ENCODE measurements at regions of chr12 and their contacts with region 1.

Region 1: GRCh38 chr12:121626087-121626852 is at the start of gene ORAI1:
- DNase-seq: peak; percentile 91 to 98 (median 95)
- ATAC-seq: peak; percentile 70
- H3K4me3 ChIP-seq: peak within 1 kb of the TSS; percentile 89
- H3K4me3 Mint-ChIP-seq: peak within 1 kb of the TSS; percentile 99
- H3K27ac ChIP-seq: peak within 1 kb of the TSS; percentile 90 to 96
- H3K27ac Mint-ChIP-seq: peak within 1 kb of the TSS; percentile 99
- H3K4me1 ChIP-seq: peaks cover 52% of the 10 kb centered on the region
- H3K4me1 Mint-ChIP-seq: peaks cover 53% of the 10 kb centered on the region
- H3K27me3 ChIP-seq: no peaks in the 10 kb centered on the region
- H3K27me3 Mint-ChIP-seq: no peaks in the 10 kb centered on the region
- CTCF ChIP-seq: no peak
- total RNA-seq, gene ORAI1: 39.7 to 42.3 TPM

Region 2: DNA sequence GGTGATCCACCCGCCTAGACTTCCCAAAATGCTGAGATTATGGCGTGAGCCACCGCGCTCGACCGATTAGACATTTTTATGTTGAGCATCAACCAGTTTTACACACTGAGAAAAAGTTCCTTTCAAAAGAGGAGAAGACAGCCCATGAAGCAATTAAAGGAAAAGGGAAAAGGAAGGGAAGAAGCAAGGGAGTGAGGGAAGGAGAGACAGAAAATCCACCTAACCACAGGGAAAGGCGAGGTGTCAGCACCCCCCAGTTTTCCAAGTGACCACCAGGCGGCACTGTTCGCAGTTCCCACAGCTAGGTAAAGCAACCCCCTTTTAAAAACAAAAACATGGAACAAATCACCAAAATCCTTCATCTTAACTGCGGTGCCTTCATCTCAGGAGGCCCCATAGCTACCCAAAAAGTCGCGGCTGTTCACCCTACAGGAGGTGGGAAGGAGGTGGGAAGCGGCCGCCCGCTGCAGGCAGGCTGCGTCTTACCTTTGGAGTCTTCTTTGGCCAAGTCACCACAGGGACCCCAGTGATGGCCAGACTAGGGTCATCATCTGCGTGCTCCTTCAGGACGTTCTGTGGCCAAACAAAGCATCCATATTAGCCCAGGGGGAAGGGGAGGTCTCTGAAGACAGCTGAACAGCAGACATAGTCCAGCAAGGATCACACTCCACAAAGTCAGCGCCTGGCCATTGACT is 132.0 kb before region 1 on chr12:
- CTCF ChIA-PET with region 1: interaction called, 4 read pairs
- POLR2A ChIA-PET with region 1: interaction called, 5 read pairs
- intact Hi-C with region 1: loop called in 1 of 2 experiments (anchors 2 kb)
- DNase-seq: peak; percentile 41 to 80 (median 57)
- ATAC-seq: peak; percentile 63
- H3K4me3 ChIP-seq: no peak overlapping the region
- H3K4me3 Mint-ChIP-seq: no peak overlapping the region
- H3K27ac ChIP-seq: no peak overlapping the region
- H3K27ac Mint-ChIP-seq: no peak overlapping the region
- H3K4me1 ChIP-seq: peaks cover 14% of the 10 kb centered on the region
- H3K4me1 Mint-ChIP-seq: peaks cover 18% of the 10 kb centered on the region
- H3K27me3 ChIP-seq: no peaks in the 10 kb centered on the region
- H3K27me3 Mint-ChIP-seq: no peaks in the 10 kb centered on the region
- CTCF ChIP-seq: peak; percentile 79

Region 3: DNA sequence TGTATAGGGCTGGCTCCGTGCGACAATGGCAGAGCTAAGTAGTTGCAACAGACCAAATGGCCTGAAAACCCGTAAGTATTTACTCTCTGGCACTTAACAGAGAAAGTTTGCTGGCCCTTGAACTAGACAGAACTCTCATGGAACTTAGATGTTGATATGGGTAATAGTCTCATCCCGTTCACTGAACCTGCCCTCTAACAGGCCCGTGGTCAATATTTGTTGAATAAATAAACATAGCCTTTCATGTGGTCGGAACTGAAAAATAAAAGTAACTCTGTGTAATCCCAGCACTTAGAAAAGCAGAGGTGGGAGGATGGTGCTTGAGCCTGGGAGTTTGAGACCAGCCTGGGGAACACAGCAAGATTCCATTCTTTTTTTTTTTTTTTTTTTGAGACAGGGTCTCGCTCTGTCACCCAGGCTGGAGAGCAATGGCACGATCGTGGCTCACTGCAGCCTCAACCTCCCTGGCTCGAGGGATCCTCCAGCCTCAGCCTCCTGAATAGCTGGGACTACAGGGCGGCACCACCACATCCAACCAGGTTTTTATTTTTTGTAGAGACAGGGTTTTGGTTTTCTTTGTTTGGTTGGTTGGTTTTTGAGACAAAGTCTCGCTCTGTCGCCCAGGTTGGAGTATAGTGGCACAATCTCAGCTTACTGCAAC is 75.2 kb before region 1 on chr12:
- CTCF ChIA-PET with region 1: interaction called, 62 read pairs
- POLR2A ChIA-PET with region 1: interaction called, 43 read pairs
- intact Hi-C with region 1: loop called (anchors 1 kb)
- DNase-seq: no peak
- ATAC-seq: no peak
- H3K4me3 ChIP-seq: no peak overlapping the region
- H3K4me3 Mint-ChIP-seq: no peak overlapping the region
- H3K27ac ChIP-seq: no peak overlapping the region
- H3K27ac Mint-ChIP-seq: no peak overlapping the region
- H3K4me1 ChIP-seq: peaks cover 5% of the 10 kb centered on the region
- H3K4me1 Mint-ChIP-seq: no peaks in the 10 kb centered on the region
- H3K27me3 ChIP-seq: no peaks in the 10 kb centered on the region
- H3K27me3 Mint-ChIP-seq: no peaks in the 10 kb centered on the region
- CTCF ChIP-seq: no peak

Region 4: DNA sequence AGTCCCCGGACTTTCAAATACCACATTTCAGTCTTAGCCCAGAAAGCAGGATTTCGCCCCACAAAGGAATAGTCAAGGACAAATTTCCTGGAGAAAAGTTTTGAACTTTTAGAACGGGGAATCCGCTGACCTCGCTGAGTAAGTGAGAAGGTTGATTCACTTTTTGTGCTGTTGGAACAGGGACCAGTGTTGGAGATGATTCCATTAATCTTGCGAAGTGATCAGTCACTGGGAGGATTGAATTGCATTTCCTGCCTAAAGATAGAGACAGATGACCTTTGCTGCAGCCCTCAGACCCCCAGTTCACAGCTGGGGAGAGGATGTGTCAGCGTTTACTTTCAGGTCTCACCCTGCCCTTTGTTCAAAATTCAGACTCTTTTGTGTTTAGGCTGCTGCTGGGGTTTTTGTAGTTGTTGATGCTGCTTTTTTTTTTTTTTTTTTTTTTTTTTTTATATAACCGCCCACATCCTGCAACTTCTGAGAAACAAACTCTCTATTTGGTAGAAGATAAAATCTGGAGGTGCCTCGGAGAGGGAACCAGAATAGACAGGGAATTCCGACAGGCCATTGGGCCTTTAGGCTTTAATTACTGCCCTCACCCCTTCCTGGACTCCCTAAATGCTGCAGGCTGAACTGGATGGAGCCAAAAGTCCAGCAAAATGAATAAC is 35.7 kb before region 1 on chr12:
- CTCF ChIA-PET with region 1: interaction called, 4 read pairs
- POLR2A ChIA-PET with region 1: interaction called, 79 read pairs
- intact Hi-C with region 1: loop called (anchors 1 to 2 kb)
- DNase-seq: peak; percentile 50 to 91 (median 61)
- ATAC-seq: peak; percentile 70
- H3K4me3 ChIP-seq: peak overlapping the region; percentile 52
- H3K4me3 Mint-ChIP-seq: peak overlapping the region; percentile 92
- H3K27ac ChIP-seq: peak overlapping the region; percentile 86 to 94
- H3K27ac Mint-ChIP-seq: peak overlapping the region; percentile 99
- H3K4me1 ChIP-seq: peaks cover 45% of the 10 kb centered on the region
- H3K4me1 Mint-ChIP-seq: peaks cover 40% of the 10 kb centered on the region
- H3K27me3 ChIP-seq: no peaks in the 10 kb centered on the region
- H3K27me3 Mint-ChIP-seq: no peaks in the 10 kb centered on the region
- CTCF ChIP-seq: no peak

Region 5: DNA sequence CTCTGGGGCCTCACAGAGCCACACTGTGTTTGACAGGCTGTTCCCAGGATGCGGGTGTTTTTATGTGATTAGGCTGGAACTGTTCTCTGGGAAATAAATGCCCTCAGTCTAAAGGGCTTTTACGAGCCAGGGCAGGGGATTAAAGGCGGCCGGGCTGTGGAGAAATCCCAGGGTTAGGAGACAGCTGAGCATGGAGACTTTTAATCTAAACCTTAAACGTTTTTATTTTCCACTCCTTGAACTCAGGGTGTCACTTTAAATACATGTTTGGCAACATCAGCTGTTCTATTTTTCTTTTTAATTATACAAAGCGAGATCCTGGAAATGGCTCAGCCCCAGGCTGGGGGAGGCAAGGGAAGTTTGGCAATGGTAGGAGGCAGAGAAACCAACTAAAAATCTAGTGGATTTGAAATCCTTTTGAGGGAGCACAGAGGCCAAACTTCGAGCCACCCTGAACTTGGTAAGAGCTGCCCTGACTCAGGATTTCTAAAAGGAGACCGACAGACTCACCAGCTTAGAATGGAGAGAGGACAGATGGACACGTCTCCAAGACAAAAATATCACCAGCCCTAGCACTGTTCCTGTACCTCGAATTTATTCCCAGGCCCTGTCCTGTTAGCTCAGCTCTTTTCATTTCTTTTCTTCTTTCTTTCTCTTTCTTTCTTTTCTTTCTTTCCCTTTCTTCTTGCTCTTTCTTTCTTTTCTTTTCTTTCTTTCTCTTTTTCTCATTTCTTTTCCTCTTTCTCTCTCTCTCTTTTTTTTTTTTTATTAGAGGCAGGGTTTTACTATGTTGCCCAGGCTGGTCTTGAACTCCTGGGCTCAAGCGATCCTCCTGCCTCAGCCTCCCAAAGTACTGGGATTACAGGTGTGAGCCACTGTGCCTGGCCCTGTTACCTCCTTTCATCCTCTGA is 15.8 kb before region 1 on chr12:
- CTCF ChIA-PET with region 1: no interaction called
- POLR2A ChIA-PET with region 1: no interaction called
- intact Hi-C with region 1: no loop called
- DNase-seq: no peak
- ATAC-seq: no peak
- H3K4me3 ChIP-seq: no peak overlapping the region
- H3K4me3 Mint-ChIP-seq: no peak overlapping the region
- H3K27ac ChIP-seq: no peak overlapping the region
- H3K27ac Mint-ChIP-seq: no peak overlapping the region
- H3K4me1 ChIP-seq: peaks cover 10% of the 10 kb centered on the region
- H3K4me1 Mint-ChIP-seq: peaks cover 9% of the 10 kb centered on the region
- H3K27me3 ChIP-seq: no peaks in the 10 kb centered on the region
- H3K27me3 Mint-ChIP-seq: no peaks in the 10 kb centered on the region
- CTCF ChIP-seq: no peak

Region 6: GRCh38 chr12:121657305-121658008 is 31.2 kb after region 1 on chr12:
- CTCF ChIA-PET with region 1: interaction called, 8 read pairs
- POLR2A ChIA-PET with region 1: interaction called, 47 read pairs
- intact Hi-C with region 1: no loop called
- DNase-seq: peak in 1 of 14 experiments; percentile 18
- ATAC-seq: no peak
- H3K4me3 ChIP-seq: no peak overlapping the region
- H3K4me3 Mint-ChIP-seq: peak overlapping the region; percentile 72
- H3K27ac ChIP-seq: peak overlapping the region in 1 of 2 donors; percentile 29
- H3K27ac Mint-ChIP-seq: peak overlapping the region; percentile 94
- H3K4me1 ChIP-seq: peaks cover 67% of the 10 kb centered on the region
- H3K4me1 Mint-ChIP-seq: peaks cover 69% of the 10 kb centered on the region
- H3K27me3 ChIP-seq: no peaks in the 10 kb centered on the region
- H3K27me3 Mint-ChIP-seq: no peaks in the 10 kb centered on the region
- CTCF ChIP-seq: no peak

Region 7: DNA sequence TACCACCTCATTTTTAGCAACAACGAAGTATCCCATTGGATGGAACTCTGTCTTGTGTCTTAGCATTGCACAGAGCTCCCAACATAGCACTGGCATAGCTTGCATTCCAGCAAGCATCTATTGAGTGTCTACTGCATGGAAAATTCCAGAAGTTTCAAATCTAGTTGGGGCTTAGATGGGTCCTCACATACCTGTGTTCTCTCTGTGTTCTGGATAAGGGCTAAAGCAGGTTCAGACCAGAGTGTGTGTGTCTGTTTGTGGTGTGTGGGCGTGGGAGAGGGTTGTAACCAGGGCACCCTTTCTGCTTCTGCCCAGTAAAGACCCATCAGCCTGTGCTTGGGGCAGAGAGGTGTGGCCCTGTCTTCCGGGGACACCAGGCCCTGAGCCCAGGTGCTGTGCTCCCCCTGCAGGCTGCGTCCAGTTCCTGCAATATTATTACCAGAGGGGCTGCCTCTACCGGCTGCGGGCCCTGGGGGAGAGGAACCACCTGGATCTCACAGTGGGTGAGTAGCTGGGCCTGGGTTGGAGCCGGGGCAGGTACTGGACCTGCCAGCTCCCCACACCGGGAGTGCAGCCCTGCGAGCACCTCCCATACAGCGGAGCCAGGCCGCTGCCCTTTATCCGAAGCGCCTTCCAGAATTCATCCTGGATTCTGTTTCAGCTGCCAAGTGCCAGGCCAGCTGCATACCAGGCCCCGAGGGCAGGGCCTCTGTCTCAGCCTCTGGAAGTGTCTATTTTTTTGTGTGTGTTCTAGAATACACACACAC is 146.9 kb after region 1 on chr12:
- CTCF ChIA-PET with region 1: no interaction called
- POLR2A ChIA-PET with region 1: no interaction called
- intact Hi-C with region 1: loop called in 1 of 2 experiments (anchors 1 kb)
- DNase-seq: peak; percentile 67 to 89 (median 76)
- ATAC-seq: peak; percentile 84
- H3K4me3 ChIP-seq: no peak overlapping the region
- H3K4me3 Mint-ChIP-seq: no peak overlapping the region
- H3K27ac ChIP-seq: no peak overlapping the region
- H3K27ac Mint-ChIP-seq: no peak overlapping the region
- H3K4me1 ChIP-seq: peaks cover 26% of the 10 kb centered on the region
- H3K4me1 Mint-ChIP-seq: peaks cover 13% of the 10 kb centered on the region
- H3K27me3 ChIP-seq: no peaks in the 10 kb centered on the region
- H3K27me3 Mint-ChIP-seq: no peaks in the 10 kb centered on the region
- CTCF ChIP-seq: peak; percentile 91

Region 8: DNA sequence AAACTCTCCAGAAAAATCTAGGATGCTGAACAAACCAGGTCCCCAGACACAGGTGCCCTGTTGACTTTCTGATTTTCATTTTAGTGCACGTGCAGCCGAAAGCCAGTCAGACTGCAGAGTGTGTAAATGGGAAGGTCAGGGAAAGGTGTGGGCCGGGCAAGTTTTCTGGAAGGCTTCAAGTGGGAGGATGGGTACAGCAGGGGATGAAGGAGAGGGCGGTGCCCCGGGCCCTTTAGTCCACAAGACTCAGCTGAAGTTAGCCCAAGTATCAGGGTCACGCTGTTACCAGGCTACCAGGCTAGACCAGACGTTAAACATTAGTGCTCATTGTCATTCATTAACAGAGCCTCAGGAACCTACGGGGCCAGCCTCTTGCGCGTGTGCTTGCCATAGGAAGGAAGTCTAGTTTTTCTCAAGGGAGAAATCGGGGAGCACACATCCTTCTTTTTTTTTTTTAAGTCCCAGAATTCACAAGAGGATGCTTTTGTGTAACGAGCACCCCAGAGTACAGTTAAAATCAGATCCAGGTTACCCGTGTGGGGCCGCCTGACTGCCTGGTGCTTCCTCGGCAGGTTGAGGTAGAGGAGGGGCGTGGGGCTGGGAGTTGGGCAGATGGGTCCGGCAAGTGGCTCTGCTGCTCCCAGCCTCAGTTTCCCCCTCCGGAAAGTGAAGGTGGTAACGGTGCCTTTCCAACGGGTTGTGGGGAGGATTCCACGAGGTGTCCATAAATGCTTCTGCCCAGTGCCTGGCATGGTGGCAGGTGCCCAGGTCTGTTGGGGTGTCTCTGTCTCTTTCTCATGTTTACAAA is 414.5 kb after region 1 on chr12:
- CTCF ChIA-PET with region 1: no interaction called
- POLR2A ChIA-PET with region 1: no interaction called
- intact Hi-C with region 1: no loop called
- DNase-seq: no peak
- ATAC-seq: no peak
- H3K4me3 ChIP-seq: no peak overlapping the region
- H3K4me3 Mint-ChIP-seq: no peak overlapping the region
- H3K27ac ChIP-seq: no peak overlapping the region
- H3K27ac Mint-ChIP-seq: no peak overlapping the region
- H3K4me1 ChIP-seq: no peaks in the 10 kb centered on the region
- H3K4me1 Mint-ChIP-seq: no peaks in the 10 kb centered on the region
- H3K27me3 ChIP-seq: no peaks in the 10 kb centered on the region
- H3K27me3 Mint-ChIP-seq: no peaks in the 10 kb centered on the region
- CTCF ChIP-seq: no peak